ENCODE measurements at regions of chr3 and their contacts with region 1.

Region 1: DNA sequence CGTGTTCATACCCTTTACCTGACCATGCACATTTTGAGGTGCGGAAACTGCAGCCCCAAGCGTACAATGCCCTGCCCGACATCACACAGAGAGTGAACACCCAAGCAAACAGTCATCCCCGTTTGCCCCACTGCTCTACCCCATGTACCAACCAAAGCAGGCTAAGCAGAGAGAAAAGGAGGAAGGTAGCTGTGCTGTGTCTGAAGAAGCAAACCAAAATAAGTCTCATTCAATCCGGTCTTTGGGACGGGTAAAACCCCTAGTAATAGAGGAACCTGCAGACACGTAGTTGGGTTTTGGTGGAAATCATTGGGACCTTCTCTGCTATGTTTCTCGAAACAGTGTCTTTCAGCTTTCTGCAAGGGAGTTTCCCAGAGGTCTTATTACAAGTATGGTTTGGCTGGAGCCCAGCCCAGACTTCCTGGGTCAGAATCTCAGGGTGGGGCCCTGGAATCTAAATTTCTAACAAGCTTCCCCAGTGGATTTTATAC is 164.6 kb upstream of the HES1 start:
- DNase-seq: peak; percentile 74 to 88 (median 78)
- H3K4me3 ChIP-seq: peak overlapping the region in 1 of 3 experiments; percentile 50
- H3K4me3 Mint-ChIP-seq: peak overlapping the region in 1 of 2 donors; percentile 67
- H3K27ac ChIP-seq: peak overlapping the region in 1 of 2 donors; percentile 50
- H3K27ac Mint-ChIP-seq: peak overlapping the region in 6 of 7 donors; percentile 46 to 85 (median 72)
- H3K4me1 ChIP-seq: peaks cover 15 to 18% of the 10 kb centered on the region in 2 donors
- H3K4me1 Mint-ChIP-seq: peaks cover 18% of the 10 kb centered on the region
- H3K27me3 ChIP-seq: peaks cover 26 to 57% of the 10 kb centered on the region in 2 donors
- H3K27me3 Mint-ChIP-seq: peaks cover 48 to 71% (median 57%) of the 10 kb centered on the region in 3 donors
- CTCF ChIP-seq: no peak

Region 2: GRCh38 chr3:194084284-194084683 is 113.0 kb after region 1 on chr3:
- intact Hi-C with region 1: no loop called
- DNase-seq: no peak
- H3K4me3 ChIP-seq: no peak overlapping the region
- H3K4me3 Mint-ChIP-seq: no peak overlapping the region
- H3K27ac ChIP-seq: no peak overlapping the region
- H3K27ac Mint-ChIP-seq: no peak overlapping the region
- H3K4me1 ChIP-seq: peaks cover 17 to 18% of the 10 kb centered on the region in 2 donors
- H3K4me1 Mint-ChIP-seq: peaks cover 18% of the 10 kb centered on the region
- H3K27me3 ChIP-seq: peaks cover 0 to 9% of the 10 kb centered on the region in 2 donors
- H3K27me3 Mint-ChIP-seq: peaks cover 8 to 18% (median 13%) of the 10 kb centered on the region in 3 donors
- CTCF ChIP-seq: no peak

Region 3: DNA sequence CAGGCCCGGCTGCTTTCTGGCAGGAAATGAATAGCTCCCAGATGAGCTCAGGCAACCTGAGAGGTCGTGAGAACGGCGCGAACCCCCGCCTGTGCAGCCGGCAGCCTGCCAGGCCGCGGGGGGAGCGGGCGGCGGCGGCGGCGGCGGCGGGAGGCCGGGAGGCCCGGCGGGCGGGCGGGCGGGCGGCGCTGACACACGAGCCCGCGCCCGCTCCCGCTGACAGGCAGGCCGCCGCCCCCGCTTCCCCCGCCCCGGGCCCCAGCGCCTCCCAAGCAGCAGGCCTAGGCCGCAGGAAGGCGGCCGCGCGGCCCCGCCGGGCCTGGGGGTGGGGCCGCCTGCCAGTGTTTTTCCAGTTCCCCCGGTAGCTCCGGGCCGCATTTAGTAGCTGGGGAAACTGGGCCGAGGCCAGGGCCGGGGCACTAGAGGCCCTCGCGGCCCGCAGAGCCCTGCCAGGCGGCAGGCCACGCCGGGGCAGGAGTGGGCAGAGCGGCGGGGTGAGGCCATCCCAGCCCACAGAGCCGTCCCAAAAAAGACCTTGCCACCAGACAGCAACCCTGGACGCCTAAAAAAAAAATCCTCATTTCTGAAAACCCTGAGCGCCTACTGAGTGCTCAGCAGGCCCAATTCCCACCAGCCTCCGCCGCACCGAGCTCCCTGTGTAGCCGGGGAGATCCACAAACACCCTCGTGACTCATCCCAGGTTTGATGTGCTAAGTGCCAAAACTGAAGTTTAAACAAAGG is 170.3 kb after region 1 on chr3:
- intact Hi-C with region 1: loop called in 1 of 2 experiments (anchors 10 kb)
- DNase-seq: peak; percentile 40 to 66 (median 55)
- H3K4me3 ChIP-seq: peak overlapping the region in 1 of 3 experiments; percentile 60
- H3K4me3 Mint-ChIP-seq: peak overlapping the region; percentile 74 to 91
- H3K27ac ChIP-seq: no peak overlapping the region
- H3K27ac Mint-ChIP-seq: peak overlapping the region in 4 of 7 donors; percentile 3 to 70 (median 44)
- H3K4me1 ChIP-seq: peaks cover 26 to 33% of the 10 kb centered on the region in 2 donors
- H3K4me1 Mint-ChIP-seq: peaks cover 27% of the 10 kb centered on the region
- H3K27me3 ChIP-seq: peaks cover 57 to 82% of the 10 kb centered on the region in 2 donors
- H3K27me3 Mint-ChIP-seq: peaks cover 66 to 90% (median 82%) of the 10 kb centered on the region in 3 donors
- CTCF ChIP-seq: no peak

Region 4: DNA sequence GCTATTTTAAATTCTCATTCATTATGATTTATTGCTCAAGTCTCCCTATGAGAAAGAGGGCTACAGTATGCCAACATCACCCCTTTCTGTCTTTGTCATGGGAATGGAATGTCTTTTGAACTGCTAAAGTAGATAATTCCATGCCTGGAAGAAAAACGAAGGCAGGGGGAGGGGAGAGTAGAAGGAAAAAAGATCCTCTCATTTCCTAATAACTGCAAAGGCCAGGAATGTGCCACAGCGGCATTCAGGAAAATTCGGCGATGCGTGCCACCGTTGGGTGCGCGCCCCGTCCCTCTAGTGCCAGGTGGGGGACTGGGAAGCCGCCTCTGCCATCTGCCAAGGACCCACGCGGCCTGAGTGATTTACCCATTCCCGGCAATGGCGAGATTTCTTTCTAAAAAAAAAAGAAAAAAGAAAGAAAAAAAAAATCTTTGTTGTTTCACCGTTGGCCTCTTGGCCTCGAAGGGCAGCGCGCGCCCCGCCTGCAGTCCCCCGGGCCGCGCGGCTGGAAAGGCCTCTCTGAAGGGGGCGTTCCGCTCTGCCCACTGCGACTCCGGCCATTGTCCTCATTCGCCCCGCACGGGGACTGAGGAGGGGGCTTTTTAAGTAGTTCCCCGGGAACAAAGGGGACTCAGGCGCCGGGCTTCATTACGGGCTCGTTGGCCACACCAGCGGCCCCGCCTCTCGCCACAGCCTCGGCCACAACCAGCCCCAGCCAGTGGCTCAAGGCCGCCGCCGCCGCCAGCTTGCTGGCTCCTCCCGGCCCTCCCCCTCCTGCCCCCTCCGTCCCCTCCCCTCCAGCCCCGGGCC is 325.4 kb after region 1 on chr3:
- intact Hi-C with region 1: no loop called
- DNase-seq: no peak
- H3K4me3 ChIP-seq: no peak overlapping the region
- H3K4me3 Mint-ChIP-seq: peak overlapping the region in 1 of 2 donors; percentile 48
- H3K27ac ChIP-seq: no peak overlapping the region
- H3K27ac Mint-ChIP-seq: no peak overlapping the region
- H3K4me1 ChIP-seq: no peaks in the 10 kb centered on the region
- H3K4me1 Mint-ChIP-seq: peaks cover 5% of the 10 kb centered on the region
- H3K27me3 ChIP-seq: peaks cover 0 to 20% of the 10 kb centered on the region in 2 donors
- H3K27me3 Mint-ChIP-seq: peaks cover 16 to 44% (median 28%) of the 10 kb centered on the region in 3 donors
- CTCF ChIP-seq: no peak